GM12878 (cell line): ENCODE measurements at regions of chr5 and their contacts with region 1.

Region 1: GRCh38 chr5:134101686-134102439 is 12.6 kb upstream of the TCF7 start:
- DNase-seq: peak; percentile 43
- ATAC-seq: peak; percentile 40
- H3K4me3 ChIP-seq: peak overlapping the region; percentile 28; the same call in 1 of the 2 replicates
- H3K27ac ChIP-seq: peak overlapping the region; percentile 95
- H3K4me1 ChIP-seq: peaks cover 70% of the 10 kb centered on the region
- H3K27me3 ChIP-seq: no peaks in the 10 kb centered on the region
- CTCF ChIP-seq: peak; percentile 79 to 92 (median 80)
- EP300 ChIP-seq: no peak
- POLR2A ChIP-seq: peak; percentile 55
- RAD21 ChIP-seq: peak; percentile 77

Region 2: DNA sequence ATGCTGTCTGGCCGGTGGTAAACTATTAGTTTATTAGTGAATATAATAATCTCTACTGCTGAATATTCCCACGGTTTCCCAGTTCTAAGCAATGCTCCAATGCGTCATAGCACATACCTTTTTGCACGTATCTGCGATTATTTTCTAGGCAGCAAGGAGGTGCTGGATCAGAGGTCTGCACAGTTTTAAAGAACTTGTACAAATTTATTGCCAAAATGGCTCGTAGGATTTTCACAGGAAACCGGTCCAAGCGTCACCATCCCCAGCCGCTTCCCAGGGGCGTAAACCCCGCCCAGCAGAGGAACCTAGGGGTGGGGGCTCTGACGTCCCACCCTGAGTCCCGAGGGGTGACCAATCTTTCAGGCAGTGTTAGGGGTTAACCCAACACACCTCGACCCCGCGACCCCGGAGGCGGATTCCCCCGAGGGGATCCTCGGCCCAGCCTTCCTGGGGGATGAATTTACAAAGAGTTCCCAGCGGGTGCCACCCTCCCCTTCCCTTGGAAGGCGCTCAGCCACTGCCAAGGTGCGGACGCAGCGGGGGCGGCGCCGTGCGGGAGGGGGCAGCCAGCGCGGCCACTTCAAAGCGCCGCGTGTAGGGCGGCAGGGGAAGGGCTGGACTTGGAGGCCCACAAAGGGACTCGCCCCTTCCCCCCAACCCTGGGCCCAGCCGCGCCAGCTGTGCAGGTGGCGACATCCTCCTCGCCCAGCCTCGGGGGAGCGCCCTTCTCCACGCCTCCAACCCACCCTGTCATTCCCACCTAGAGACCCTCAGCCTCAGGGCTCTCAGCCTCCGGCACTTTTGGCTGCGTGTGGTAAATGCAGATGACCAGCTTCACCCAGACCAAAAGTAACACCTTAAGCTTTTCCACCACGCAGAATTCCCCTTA is 30.9 kb before region 1 on chr5:
- CTCF ChIA-PET with region 1: interaction called, 47 read pairs
- POLR2A ChIA-PET with region 1: interaction called, 81 read pairs
- RAD21 ChIA-PET with region 1: interaction called, 23 read pairs
- SMC1A ChIA-PET with region 1: interaction called, 80 read pairs
- in situ Hi-C with region 1: no loop called
- intact Hi-C with region 1: loop called (anchors 1 kb)
- DNase-seq: peak; percentile 69
- ATAC-seq: peak; percentile 72
- H3K4me3 ChIP-seq: peak overlapping the region; percentile 69
- H3K27ac ChIP-seq: peak overlapping the region; percentile 66
- H3K4me1 ChIP-seq: peaks cover 33% of the 10 kb centered on the region
- H3K27me3 ChIP-seq: no peaks in the 10 kb centered on the region
- CTCF ChIP-seq: peak; percentile 5 to 27 (median 14); a peak in 3 of 6 replicates
- EP300 ChIP-seq: no peak
- POLR2A ChIP-seq: peak; percentile 60
- RAD21 ChIP-seq: no peak

Region 3: DNA sequence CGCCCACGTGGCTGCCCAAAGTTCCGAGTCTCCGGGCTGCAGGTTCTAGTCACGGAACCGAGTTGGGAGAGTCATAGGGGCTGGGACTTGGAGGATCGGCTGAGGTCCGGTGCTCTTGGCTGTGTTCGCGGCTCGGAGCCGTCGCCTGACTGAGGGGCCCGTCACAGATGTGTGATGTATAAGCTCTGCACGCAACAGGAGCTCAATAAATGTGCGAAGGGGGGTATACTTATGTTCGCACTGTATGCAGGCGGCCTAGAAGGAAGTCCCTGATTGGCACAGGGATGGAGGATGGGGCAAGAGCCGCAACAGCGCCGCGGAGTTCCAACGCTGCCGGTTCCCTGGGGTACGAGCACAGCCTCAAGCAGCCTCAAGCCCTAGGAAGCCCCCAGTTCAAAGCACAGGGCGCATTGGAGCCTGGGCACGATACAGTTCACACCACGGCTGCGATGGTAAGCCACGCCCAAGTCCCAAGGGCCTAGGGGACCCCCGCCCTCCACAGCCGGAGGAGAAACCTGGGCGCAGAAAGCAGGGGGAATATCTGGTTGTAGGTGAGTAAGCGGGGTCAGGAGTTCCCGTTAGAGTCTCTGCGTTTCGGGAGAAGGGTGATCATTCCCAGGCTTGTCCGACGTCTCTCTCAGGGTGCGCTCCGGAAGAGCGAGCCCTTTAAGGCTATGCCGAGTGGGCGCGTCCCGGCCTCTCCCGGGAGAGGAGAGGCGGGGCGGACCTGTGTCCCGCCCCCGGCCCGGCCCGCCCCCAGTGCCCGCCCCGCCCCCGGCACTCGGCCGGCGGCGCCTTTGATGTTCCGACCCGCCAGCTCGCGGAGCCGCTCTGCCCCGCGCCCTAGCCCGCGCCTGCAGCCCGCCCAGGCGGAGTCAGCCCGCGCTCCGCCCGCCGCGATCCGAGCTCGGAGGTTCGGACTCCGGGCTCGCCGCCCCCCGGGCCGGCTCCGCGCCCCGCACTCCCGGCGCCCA is 12.3 kb after region 1 on chr5 and contains the start of gene TCF7:
- CTCF ChIA-PET with region 1: interaction called, 112 read pairs
- POLR2A ChIA-PET with region 1: no interaction called
- RAD21 ChIA-PET with region 1: no interaction called
- SMC1A ChIA-PET with region 1: interaction called, 152 read pairs
- in situ Hi-C with region 1: no loop called
- intact Hi-C with region 1: loop called (anchors 1 kb)
- DNase-seq: no peak
- ATAC-seq: peak; percentile 82
- H3K4me3 ChIP-seq: peak within 1 kb of the TSS; percentile 83
- H3K27ac ChIP-seq: peak within 1 kb of the TSS; percentile 56
- H3K4me1 ChIP-seq: peaks cover 40% of the 10 kb centered on the region
- H3K27me3 ChIP-seq: no peaks in the 10 kb centered on the region; a peak in 1 of 4 replicates
- CTCF ChIP-seq: no peak
- EP300 ChIP-seq: no peak
- POLR2A ChIP-seq: peak; percentile 72
- RAD21 ChIP-seq: no peak
- polyA plus RNA-seq, gene TCF7: 10.0 to 13.2 TPM

Region 4: GRCh38 chr5:134125039-134126015 is 23.5 kb after region 1 on chr5:
- CTCF ChIA-PET with region 1: interaction called, 104 read pairs
- POLR2A ChIA-PET with region 1: no interaction called
- RAD21 ChIA-PET with region 1: interaction called, 6 read pairs
- SMC1A ChIA-PET with region 1: no interaction called
- in situ Hi-C with region 1: no loop called
- intact Hi-C with region 1: no loop called
- DNase-seq: no peak
- ATAC-seq: peak; percentile 41
- H3K4me3 ChIP-seq: no peak overlapping the region
- H3K27ac ChIP-seq: peak overlapping the region; percentile 47
- H3K4me1 ChIP-seq: peaks cover 64% of the 10 kb centered on the region
- H3K27me3 ChIP-seq: no peaks in the 10 kb centered on the region
- CTCF ChIP-seq: no peak
- EP300 ChIP-seq: 0 out of 4 replicates have a peak, but pooled peaks of 1 of the 2 experiments have one; percentile 11
- POLR2A ChIP-seq: no peak
- RAD21 ChIP-seq: no peak

Region 5: DNA sequence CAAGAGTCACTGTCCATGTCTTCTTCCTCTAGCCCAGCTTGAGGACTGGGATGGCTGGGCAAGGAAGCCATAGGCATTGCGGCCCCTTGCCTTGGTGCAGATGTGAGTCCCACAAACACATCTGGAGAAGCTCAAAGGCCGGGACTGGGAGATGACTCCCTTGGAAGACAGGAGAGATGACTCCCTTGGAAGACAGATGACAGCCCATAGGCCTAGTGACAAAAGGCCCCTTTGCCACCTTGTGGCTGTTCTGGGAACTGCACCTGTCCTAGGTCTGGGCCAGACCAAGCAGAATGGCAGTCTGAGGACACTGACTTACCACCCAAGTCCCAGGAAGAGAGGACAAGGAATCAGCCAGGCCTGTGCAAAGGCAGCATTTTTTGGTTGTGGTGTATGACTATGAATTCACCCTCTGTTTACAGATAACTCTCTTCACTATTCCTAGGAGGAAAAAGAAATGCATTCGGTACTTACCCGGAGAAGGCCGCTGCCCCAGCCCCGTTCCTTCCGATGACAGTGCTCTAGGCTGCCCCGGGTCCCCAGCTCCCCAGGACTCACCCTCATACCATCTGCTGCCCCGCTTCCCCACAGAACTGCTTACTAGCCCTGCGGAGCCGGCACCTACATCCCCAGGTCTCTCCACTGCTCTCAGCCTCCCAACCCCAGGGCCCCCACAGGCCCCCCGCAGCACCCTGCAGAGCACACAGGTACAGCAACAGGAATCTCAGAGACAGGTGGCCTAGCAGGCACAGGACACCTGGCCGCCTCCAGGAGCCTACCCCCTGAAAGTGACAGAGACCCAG is 44.1 kb after region 1 on chr5:
- CTCF ChIA-PET with region 1: no interaction called
- POLR2A ChIA-PET with region 1: interaction called, 5 read pairs
- RAD21 ChIA-PET with region 1: interaction called, 30 read pairs
- SMC1A ChIA-PET with region 1: interaction called, 27 read pairs
- in situ Hi-C with region 1: no loop called
- intact Hi-C with region 1: no loop called
- DNase-seq: no peak
- ATAC-seq: peak; percentile 86
- H3K4me3 ChIP-seq: no peak overlapping the region
- H3K27ac ChIP-seq: 0 out of 2 replicates have a peak overlapping the region, but pooled peaks have one; percentile 22
- H3K4me1 ChIP-seq: peaks cover 3% of the 10 kb centered on the region
- H3K27me3 ChIP-seq: no peaks in the 10 kb centered on the region
- CTCF ChIP-seq: peak; percentile 92 to 96 (median 94)
- EP300 ChIP-seq: no peak
- POLR2A ChIP-seq: no peak
- RAD21 ChIP-seq: peak; percentile 85